ENCODE measurements at regions of chr6 and their contacts with region 1.

Region 1: GRCh38 chr6:88989215-88989614 is 25.8 kb upstream of the RNGTT start:
- DNase-seq: no peak
- H3K4me3 ChIP-seq: no peak overlapping the region
- H3K4me3 Mint-ChIP-seq: no peak overlapping the region
- H3K27ac ChIP-seq: no peak overlapping the region
- H3K27ac Mint-ChIP-seq: no peak overlapping the region
- H3K4me1 ChIP-seq: peaks cover 12 to 15% of the 10 kb centered on the region in 2 donors
- H3K4me1 Mint-ChIP-seq: peaks cover 18% of the 10 kb centered on the region
- H3K27me3 ChIP-seq: no peaks in the 10 kb centered on the region
- H3K27me3 Mint-ChIP-seq: peaks cover 0 to 1% (median 0%) of the 10 kb centered on the region in 3 donors
- CTCF ChIP-seq: no peak

Region 2: DNA sequence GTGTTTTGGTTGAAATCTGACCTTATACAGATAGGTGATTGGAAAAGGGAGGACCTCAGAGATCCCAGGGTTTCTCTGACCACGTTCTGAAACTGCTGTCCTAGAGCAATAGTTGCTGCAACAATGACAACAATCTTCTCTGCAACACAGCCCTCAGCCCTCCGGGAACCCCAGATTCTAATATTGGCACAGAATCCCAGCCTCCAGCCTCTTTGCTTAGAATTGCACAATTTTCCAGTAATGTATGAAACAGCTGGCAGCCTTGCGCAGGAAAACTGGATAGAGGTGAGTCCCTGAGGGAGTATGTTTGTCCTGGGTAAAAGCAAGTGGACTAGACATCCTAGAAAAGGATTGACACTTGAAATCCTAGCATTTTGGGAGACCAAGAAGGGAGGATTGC is 60.9 kb after region 1 on chr6:
- intact Hi-C with region 1: loop called in 1 of 2 experiments (anchors 10 kb)
- DNase-seq: peak in 1 of 3 donors; percentile 19
- H3K4me3 ChIP-seq: no peak overlapping the region
- H3K4me3 Mint-ChIP-seq: no peak overlapping the region
- H3K27ac ChIP-seq: no peak overlapping the region
- H3K27ac Mint-ChIP-seq: peak overlapping the region in 2 of 7 donors; percentile 59 to 60
- H3K4me1 ChIP-seq: peaks cover 27 to 36% of the 10 kb centered on the region in 2 donors
- H3K4me1 Mint-ChIP-seq: peaks cover 45% of the 10 kb centered on the region
- H3K27me3 ChIP-seq: no peaks in the 10 kb centered on the region
- H3K27me3 Mint-ChIP-seq: peaks cover 0 to 4% (median 1%) of the 10 kb centered on the region in 3 donors
- CTCF ChIP-seq: no peak

Region 3: GRCh38 chr6:89242574-89243330 is 253.5 kb after region 1 on chr6:
- intact Hi-C with region 1: loop called (anchors 5 kb)
- DNase-seq: peak in 2 of 3 donors; percentile 29 to 34
- H3K4me3 ChIP-seq: no peak overlapping the region
- H3K4me3 Mint-ChIP-seq: no peak overlapping the region
- H3K27ac ChIP-seq: no peak overlapping the region
- H3K27ac Mint-ChIP-seq: no peak overlapping the region
- H3K4me1 ChIP-seq: peaks cover 0 to 5% of the 10 kb centered on the region in 2 donors
- H3K4me1 Mint-ChIP-seq: peaks cover 13% of the 10 kb centered on the region
- H3K27me3 ChIP-seq: no peaks in the 10 kb centered on the region
- H3K27me3 Mint-ChIP-seq: no peaks in the 10 kb centered on the region
- CTCF ChIP-seq: peak; percentile 55